Activated CD4-positive, alpha-beta T cell treated with anti-CD3 and anti-CD28 coated beads for 36 hours (primary cell): ENCODE measurements at regions of chr7 and their contacts with region 1.

Region 1: GRCh38 chr7:25098096-25099046 is 26.7 kb downstream of the CYCS start:
- DNase-seq: peak; percentile 76
- ATAC-seq: peak; percentile 81
- H3K4me3 Mint-ChIP-seq: no peak overlapping the region
- H3K27ac Mint-ChIP-seq: no peak overlapping the region
- H3K4me1 Mint-ChIP-seq: peaks cover 8% of the 10 kb centered on the region
- H3K27me3 Mint-ChIP-seq: peaks cover 2% of the 10 kb centered on the region

Region 2: DNA sequence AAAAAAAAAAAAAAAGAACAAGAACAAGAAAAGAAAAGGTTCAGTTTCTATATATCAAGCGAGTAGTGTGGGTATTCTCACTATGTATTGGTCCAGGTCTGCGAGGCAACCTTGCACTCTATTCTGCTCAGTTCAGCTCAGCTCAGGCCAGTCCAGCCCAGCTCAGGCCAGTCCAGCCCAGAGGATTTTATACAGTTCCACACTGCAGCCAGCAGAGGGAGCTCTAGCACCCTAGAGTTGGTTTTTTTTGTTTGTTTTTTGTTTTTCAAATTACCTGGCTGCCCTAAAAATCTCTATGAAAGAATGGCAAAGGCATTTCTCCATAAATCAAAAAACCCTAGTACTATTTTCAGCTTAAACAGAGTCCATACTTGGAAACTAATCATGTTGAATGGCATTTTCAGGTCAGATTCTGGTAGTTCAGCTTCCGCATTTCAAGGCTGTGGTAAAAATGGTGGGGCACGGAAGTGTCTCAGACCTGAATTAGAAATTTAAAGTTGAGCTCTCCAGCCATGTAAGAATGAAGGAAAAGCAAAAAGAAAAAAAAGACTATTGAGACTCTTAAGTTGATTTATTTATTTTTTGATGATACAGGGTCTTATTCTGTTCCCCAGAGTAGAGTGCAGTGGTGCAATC is 285.9 kb before region 1 on chr7:
- CTCF ChIA-PET with region 1: interaction called, 152 read pairs
- POLR2A ChIA-PET with region 1: no interaction called
- intact Hi-C with region 1: loop called (anchors 1 kb)
- DNase-seq: peak; percentile 68
- ATAC-seq: peak; percentile 69
- H3K4me3 Mint-ChIP-seq: no peak overlapping the region
- H3K27ac Mint-ChIP-seq: no peak overlapping the region
- H3K4me1 Mint-ChIP-seq: no peaks in the 10 kb centered on the region
- H3K27me3 Mint-ChIP-seq: no peaks in the 10 kb centered on the region

Region 3: GRCh38 chr7:24911213-24911603 is 187.2 kb before region 1 on chr7:
- CTCF ChIA-PET with region 1: no interaction called
- POLR2A ChIA-PET with region 1: no interaction called
- intact Hi-C with region 1: no loop called
- DNase-seq: peak; percentile 34
- ATAC-seq: peak; percentile 10
- H3K4me3 Mint-ChIP-seq: peak overlapping the region; percentile 10
- H3K27ac Mint-ChIP-seq: peak overlapping the region; percentile 81
- H3K4me1 Mint-ChIP-seq: peaks cover 62% of the 10 kb centered on the region
- H3K27me3 Mint-ChIP-seq: no peaks in the 10 kb centered on the region

Region 4: DNA sequence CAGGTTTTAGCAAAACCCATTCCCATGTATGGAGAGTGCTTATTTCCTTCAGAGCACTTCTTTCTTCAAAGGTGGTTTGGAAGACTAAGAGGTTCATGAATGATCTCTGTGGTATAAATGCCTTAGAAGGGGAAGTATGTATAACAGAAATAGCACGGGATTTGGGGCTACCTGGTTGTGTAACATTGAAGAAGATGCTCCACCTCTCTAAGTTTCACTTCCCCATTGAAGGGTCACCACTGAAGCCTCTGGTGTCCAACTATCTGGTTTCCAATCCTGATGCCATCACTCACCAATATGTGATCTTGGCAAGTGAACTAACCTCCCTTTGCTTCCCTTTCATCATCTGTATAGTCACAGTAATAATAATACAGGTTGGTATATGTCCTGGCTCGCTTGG is 10.5 kb before region 1 on chr7:
- CTCF ChIA-PET with region 1: interaction called, 21 read pairs
- POLR2A ChIA-PET with region 1: no interaction called
- intact Hi-C with region 1: no loop called
- DNase-seq: no peak
- ATAC-seq: no peak
- H3K4me3 Mint-ChIP-seq: no peak overlapping the region
- H3K27ac Mint-ChIP-seq: no peak overlapping the region
- H3K4me1 Mint-ChIP-seq: no peaks in the 10 kb centered on the region
- H3K27me3 Mint-ChIP-seq: peaks cover 2% of the 10 kb centered on the region

Region 5: DNA sequence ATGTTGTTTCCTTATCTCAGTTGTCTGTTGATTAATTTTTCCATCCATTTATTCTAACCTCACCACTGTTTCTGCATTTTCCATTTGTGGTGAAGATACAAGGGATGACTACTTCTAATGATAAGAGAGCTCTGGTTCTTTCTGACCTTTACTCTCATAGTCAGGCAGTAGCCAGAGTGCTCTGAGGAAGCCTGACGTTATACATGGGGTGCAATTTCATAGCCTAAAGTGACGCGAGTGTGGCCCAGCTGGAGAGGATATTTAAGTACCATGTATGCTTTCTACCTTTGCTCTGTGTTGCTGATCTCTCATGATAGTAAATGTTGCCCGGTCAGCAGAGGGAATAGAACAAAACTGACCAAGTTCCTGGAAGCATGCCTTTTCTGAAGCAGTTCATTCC is 60.6 kb after region 1 on chr7:
- CTCF ChIA-PET with region 1: interaction called, 6 read pairs
- POLR2A ChIA-PET with region 1: no interaction called
- intact Hi-C with region 1: loop called in 1 of 2 experiments (anchors 1 kb)
- DNase-seq: no peak
- ATAC-seq: no peak
- H3K4me3 Mint-ChIP-seq: no peak overlapping the region
- H3K27ac Mint-ChIP-seq: no peak overlapping the region
- H3K4me1 Mint-ChIP-seq: peaks cover 2% of the 10 kb centered on the region
- H3K27me3 Mint-ChIP-seq: no peaks in the 10 kb centered on the region

Region 6: GRCh38 chr7:25839084-25839769 is 740.9 kb after region 1 on chr7:
- CTCF ChIA-PET with region 1: no interaction called
- POLR2A ChIA-PET with region 1: no interaction called
- intact Hi-C with region 1: no loop called
- DNase-seq: no peak
- ATAC-seq: no peak
- H3K4me3 Mint-ChIP-seq: no peak overlapping the region
- H3K27ac Mint-ChIP-seq: no peak overlapping the region
- H3K4me1 Mint-ChIP-seq: no peaks in the 10 kb centered on the region
- H3K27me3 Mint-ChIP-seq: peaks cover 27% of the 10 kb centered on the region